SK-N-SH (cell line): ENCODE measurements at regions of chr14 and their contacts with region 1.

Region 1: GRCh38 chr14:58107947-58108552 is 44.0 kb downstream of the ARMH4 start:
- DNase-seq: peak; percentile 51
- H3K4me3 ChIP-seq: no peak overlapping the region; a peak in 1 of 4 replicates
- H3K27ac ChIP-seq: no peak overlapping the region
- H3K4me1 ChIP-seq: no peaks in the 10 kb centered on the region
- H3K27me3 ChIP-seq: no peaks in the 10 kb centered on the region
- CTCF ChIP-seq: peak; percentile 89
- EP300 ChIP-seq: no peak
- RAD21 ChIP-seq: peak; percentile 86

Region 2: DNA sequence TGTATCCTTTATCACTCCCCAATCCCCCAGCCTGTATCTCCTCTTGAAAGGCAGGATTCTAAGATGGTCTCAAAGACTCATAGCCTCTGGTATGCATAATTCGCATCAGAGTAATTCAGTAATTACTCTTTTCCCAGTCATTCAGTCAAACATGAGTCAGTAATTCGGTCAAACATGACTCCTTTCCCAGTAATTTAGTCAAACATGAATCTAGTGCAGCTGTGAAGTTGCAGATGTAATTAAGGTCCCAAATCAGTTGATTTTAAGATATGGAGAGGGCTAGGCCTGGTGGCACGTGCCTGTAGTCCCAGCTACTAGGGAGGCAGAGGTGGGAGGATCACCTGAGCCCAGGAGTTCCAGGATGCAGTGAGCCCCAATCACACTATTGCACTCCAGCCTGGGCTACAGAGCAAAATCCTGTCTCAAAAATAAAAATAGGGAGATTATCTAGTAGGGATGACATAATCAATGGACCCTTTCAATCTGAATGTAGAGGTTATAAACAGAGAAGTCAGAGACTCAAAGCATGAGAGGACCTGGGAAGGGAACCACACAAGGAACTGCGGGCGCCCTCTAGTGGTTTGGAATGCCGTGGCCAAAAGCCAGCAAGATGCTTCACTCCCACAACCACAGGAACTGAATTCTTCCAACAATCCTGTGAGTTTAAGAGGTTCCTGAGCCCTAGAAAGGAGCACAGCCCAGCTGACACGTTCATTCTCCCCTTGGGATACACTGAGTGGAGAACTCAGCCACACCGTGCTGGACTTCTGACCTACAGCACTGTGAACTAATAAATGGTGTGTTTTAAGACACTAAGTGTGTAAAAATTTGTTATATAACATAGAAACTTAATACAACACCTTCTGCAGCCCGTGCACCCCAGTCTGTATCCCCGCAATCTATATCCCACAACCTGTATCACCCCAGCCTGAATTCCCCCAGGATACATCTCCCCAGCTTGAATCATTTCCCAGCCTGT is 58.2 kb after region 1 on chr14:
- CTCF ChIA-PET with region 1: interaction called, 20 read pairs
- POLR2A ChIA-PET with region 1: no interaction called
- DNase-seq: peak; percentile 67
- H3K4me3 ChIP-seq: no peak overlapping the region; a peak in 1 of 4 replicates
- H3K27ac ChIP-seq: no peak overlapping the region
- H3K4me1 ChIP-seq: peaks cover 3 to 4% of the 10 kb centered on the region in 2 experiments; a peak in 1 of 4 replicates
- H3K27me3 ChIP-seq: no peaks in the 10 kb centered on the region
- CTCF ChIP-seq: peak; percentile 92
- EP300 ChIP-seq: no peak
- RAD21 ChIP-seq: peak; percentile 69

Region 3: GRCh38 chr14:58362798-58363412 is 254.9 kb after region 1 on chr14:
- CTCF ChIA-PET with region 1: interaction called, 11 read pairs
- POLR2A ChIA-PET with region 1: no interaction called
- DNase-seq: peak; percentile 31
- H3K4me3 ChIP-seq: no peak overlapping the region
- H3K27ac ChIP-seq: no peak overlapping the region
- H3K4me1 ChIP-seq: no peaks in the 10 kb centered on the region
- H3K27me3 ChIP-seq: no peaks in the 10 kb centered on the region
- CTCF ChIP-seq: peak; percentile 53
- EP300 ChIP-seq: no peak
- RAD21 ChIP-seq: peak; percentile 63